ENCODE measurements at regions of chr3 and their contacts with region 1.

Region 1: DNA sequence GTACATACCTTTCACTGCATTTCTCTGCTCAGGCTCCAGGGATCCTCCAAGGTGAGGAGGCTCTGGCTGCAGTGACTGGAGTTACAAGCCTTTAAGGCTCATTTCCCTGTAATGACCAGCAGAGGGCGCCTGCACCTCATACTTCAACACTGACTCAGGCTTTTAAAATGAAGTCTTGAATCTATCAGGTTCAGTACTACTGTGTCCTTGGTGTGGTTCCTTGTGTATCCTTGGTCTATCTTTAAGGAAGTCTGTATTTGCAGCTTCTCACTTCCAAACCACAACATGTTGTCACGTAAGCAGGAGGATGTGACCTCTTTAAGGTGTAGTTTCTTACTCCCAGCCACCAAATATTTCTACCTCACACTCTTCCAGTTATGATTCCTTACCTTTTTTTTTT is 122.5 kb upstream of the ZBED2 start:
- DNase-seq: peak; percentile 57
- H3K4me3 ChIP-seq: no peak overlapping the region
- CTCF ChIP-seq: peak; percentile 80

Region 2: DNA sequence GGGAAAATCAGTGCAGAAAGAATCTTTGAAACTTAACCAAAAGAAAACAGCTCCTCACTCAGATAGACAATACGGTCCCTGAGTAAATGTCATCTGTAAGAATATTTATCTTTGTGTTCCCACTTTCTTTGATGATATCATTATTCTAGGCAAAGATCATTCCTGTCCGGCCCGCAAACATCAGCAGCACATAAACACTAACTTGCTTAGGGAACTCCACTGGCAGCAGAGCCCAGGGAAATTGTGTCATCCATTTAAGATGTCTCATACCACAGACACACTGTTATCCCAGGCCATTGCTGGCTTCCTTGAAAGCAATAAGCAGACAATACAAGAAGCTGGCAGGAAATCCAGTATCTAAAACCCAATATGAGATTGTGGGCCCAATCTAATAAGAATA is 195.7 kb before region 1 on chr3:
- CTCF ChIA-PET with region 1: no interaction called
- POLR2A ChIA-PET with region 1: no interaction called
- DNase-seq: no peak
- H3K4me3 ChIP-seq: no peak overlapping the region
- CTCF ChIP-seq: no peak

Region 3: GRCh38 chr3:111700054-111700453 is 17.5 kb before region 1 on chr3:
- CTCF ChIA-PET with region 1: interaction called, 49 read pairs
- POLR2A ChIA-PET with region 1: no interaction called
- DNase-seq: no peak
- H3K4me3 ChIP-seq: no peak overlapping the region
- CTCF ChIP-seq: no peak

Region 4: DNA sequence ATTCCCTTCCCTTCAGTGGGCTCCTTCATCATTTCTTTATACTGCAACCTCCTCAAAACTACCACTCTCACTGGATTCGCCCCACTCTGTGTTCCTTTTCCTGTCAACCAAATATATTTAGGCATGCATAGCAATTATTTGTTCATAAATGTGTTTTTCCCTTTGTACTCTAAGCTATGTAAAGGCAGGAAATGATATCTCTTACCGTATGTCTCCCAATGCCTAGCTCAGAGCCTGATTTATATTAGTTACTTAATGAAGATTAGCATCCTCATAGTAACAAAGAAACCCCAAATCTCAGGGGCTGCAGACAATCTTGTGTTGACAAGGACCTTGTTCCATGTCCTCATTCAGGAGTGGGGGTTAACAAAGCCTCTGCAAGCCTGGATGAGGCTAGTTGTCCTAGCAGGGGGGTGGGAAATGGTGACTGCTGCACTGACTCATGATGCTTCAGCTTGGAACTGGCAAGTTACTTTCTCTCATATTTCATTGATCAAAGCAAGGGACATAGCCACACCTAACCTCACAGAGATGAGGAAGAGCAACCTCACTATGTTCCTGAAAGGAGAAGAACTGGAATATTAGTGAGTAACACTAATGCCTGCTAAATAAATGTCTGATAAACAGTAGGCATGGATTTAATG is 156.7 kb after region 1 on chr3:
- CTCF ChIA-PET with region 1: interaction called, 408 read pairs
- POLR2A ChIA-PET with region 1: no interaction called
- DNase-seq: no peak
- H3K4me3 ChIP-seq: no peak overlapping the region
- CTCF ChIP-seq: no peak

Region 5: GRCh38 chr3:111910806-111911205 is 193.2 kb after region 1 on chr3:
- CTCF ChIA-PET with region 1: interaction called, 126 read pairs
- POLR2A ChIA-PET with region 1: no interaction called
- DNase-seq: peak; percentile 71
- H3K4me3 ChIP-seq: no peak overlapping the region
- CTCF ChIP-seq: no peak

Region 6: GRCh38 chr3:111967651-111968274 is 250.2 kb after region 1 on chr3:
- CTCF ChIA-PET with region 1: interaction called, 324 read pairs
- POLR2A ChIA-PET with region 1: no interaction called
- DNase-seq: peak; percentile 65
- H3K4me3 ChIP-seq: no peak overlapping the region
- CTCF ChIP-seq: peak; percentile 87

Region 7: GRCh38 chr3:112013058-112013783 is 295.6 kb after region 1 on chr3:
- CTCF ChIA-PET with region 1: interaction called, 95 read pairs
- POLR2A ChIA-PET with region 1: no interaction called
- DNase-seq: peak; percentile 23
- H3K4me3 ChIP-seq: no peak overlapping the region
- CTCF ChIP-seq: peak; percentile 70

Measured in AG04449 (cell line).